Breast epithelium (tissue), 4 donors: ENCODE measurements at regions of chr3 and their contacts with region 1.

Region 1: GRCh38 chr3:78116874-78117273 is 1077.0 kb downstream of the ROBO2 start:
- DNase-seq: no peak
- H3K4me3 ChIP-seq: no peak overlapping the region
- H3K27ac ChIP-seq: no peak overlapping the region
- H3K4me1 ChIP-seq: no peaks in the 10 kb centered on the region
- H3K27me3 ChIP-seq: no peaks in the 10 kb centered on the region
- CTCF ChIP-seq: no peak
- POLR2A ChIP-seq: no peak

Region 2: DNA sequence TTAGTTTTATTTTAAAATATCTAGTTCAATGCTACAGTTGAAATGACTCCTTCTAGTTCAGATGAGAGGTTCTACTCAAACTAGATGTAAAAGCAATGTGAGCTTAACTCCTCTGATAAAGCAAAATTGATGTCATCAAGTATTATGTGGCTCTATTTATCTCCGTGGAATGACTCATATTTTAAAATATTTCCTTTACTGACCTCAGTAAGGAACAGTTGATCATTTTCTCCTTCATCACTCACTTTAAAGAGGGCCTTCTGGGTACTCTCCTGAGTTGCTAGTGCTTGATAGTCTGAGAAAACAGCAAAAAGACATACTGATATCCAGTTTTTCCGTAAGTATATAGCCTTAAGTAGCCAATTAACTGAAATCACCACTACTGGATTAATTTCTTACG is 22.3 kb after region 1 on chr3:
- intact Hi-C with region 1: loop called (anchors 1 kb)
- DNase-seq: no peak
- H3K4me3 ChIP-seq: no peak overlapping the region
- H3K27ac ChIP-seq: no peak overlapping the region
- H3K4me1 ChIP-seq: no peaks in the 10 kb centered on the region
- H3K27me3 ChIP-seq: no peaks in the 10 kb centered on the region
- CTCF ChIP-seq: no peak
- POLR2A ChIP-seq: no peak